Upper lobe of right lung (tissue), 1 donor: ENCODE measurements at regions of chr1 and their contacts with region 1.

Region 1: GRCh38 chr1:115595279-115596079 is 46.3 kb upstream of the VANGL1 start:
- DNase-seq: peak; percentile 87
- ATAC-seq: peak; percentile 95
- H3K4me3 ChIP-seq: no peak overlapping the region
- H3K27ac ChIP-seq: no peak overlapping the region
- H3K4me1 ChIP-seq: no peaks in the 10 kb centered on the region
- H3K27me3 ChIP-seq: no peaks in the 10 kb centered on the region
- CTCF ChIP-seq: peak; percentile 91

Region 2: DNA sequence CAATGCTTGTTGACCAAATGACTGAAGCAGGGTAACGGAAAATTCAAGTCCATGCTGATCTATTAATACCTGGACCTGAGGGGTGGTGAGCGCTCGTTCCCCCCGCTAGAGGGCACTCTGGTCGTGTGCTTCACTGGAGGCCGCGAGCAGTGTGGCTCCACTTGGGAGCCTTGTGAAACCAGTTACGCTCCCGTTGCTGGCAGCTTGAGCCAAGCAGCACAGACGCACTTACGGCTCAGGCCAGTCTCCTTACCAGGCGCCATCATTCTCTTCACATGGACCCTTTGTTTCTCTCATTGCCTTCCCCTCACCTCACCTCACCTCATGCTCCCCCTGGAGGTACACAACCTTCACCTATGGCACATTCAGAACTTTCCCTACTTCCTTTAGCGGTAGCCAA is 456.5 kb before region 1 on chr1:
- intact Hi-C with region 1: loop called (anchors 5 kb)
- DNase-seq: peak; percentile 89
- ATAC-seq: peak; percentile 98
- H3K4me3 ChIP-seq: no peak overlapping the region
- H3K27ac ChIP-seq: no peak overlapping the region
- H3K4me1 ChIP-seq: no peaks in the 10 kb centered on the region
- H3K27me3 ChIP-seq: peaks cover 7% of the 10 kb centered on the region
- CTCF ChIP-seq: peak; percentile 86

Region 3: GRCh38 chr1:115705085-115706008 is 109.9 kb after region 1 on chr1:
- intact Hi-C with region 1: no loop called
- DNase-seq: no peak
- ATAC-seq: no peak
- H3K4me3 ChIP-seq: no peak overlapping the region
- H3K27ac ChIP-seq: no peak overlapping the region
- H3K4me1 ChIP-seq: no peaks in the 10 kb centered on the region
- H3K27me3 ChIP-seq: no peaks in the 10 kb centered on the region
- CTCF ChIP-seq: no peak

Region 4: DNA sequence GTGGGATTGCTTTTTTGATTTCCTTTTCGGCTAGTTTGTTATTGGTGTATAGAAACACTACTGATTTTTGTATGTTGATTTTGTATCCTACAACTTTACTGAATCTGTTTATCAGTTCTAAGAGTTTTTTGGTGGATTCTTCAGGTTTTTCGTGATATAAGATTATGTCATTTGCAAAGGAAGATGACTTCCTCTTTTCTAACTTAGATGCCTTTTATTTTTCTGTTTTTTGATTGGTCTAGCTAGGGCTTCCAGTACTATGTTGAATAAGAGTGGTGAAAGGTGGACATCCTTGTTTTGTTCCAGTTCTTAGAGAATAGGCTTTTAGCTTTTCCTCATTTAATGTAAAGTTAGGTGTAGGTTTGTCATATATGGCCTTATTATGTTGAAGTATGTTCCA is 258.5 kb after region 1 on chr1:
- intact Hi-C with region 1: no loop called
- DNase-seq: no peak
- ATAC-seq: no peak
- H3K4me3 ChIP-seq: no peak overlapping the region
- H3K27ac ChIP-seq: no peak overlapping the region
- H3K4me1 ChIP-seq: no peaks in the 10 kb centered on the region
- H3K27me3 ChIP-seq: no peaks in the 10 kb centered on the region
- CTCF ChIP-seq: no peak